ENCODE measurements at regions of chr12 and their contacts with region 1.

Region 1: GRCh38 chr12:108371801-108372344 is 32.8 kb upstream of the CMKLR1 start:
- DNase-seq: no peak
- ATAC-seq: peak in 2 of 4 donors; percentile 47 to 56
- H3K4me3 ChIP-seq: no peak overlapping the region
- H3K27ac ChIP-seq: no peak overlapping the region
- H3K4me1 ChIP-seq: no peaks in the 10 kb centered on the region
- H3K27me3 ChIP-seq: no peaks in the 10 kb centered on the region
- CTCF ChIP-seq: no peak

Region 2: GRCh38 chr12:108234158-108234557 is 137.7 kb before region 1 on chr12:
- intact Hi-C with region 1: loop called in 1 of 3 experiments (anchors 10 kb)
- DNase-seq: no peak
- ATAC-seq: no peak
- H3K4me3 ChIP-seq: no peak overlapping the region
- H3K27ac ChIP-seq: no peak overlapping the region
- H3K4me1 ChIP-seq: no peaks in the 10 kb centered on the region
- H3K27me3 ChIP-seq: no peaks in the 10 kb centered on the region
- CTCF ChIP-seq: no peak